ENCODE measurements at regions of chr1 and their contacts with region 1.

Region 1: DNA sequence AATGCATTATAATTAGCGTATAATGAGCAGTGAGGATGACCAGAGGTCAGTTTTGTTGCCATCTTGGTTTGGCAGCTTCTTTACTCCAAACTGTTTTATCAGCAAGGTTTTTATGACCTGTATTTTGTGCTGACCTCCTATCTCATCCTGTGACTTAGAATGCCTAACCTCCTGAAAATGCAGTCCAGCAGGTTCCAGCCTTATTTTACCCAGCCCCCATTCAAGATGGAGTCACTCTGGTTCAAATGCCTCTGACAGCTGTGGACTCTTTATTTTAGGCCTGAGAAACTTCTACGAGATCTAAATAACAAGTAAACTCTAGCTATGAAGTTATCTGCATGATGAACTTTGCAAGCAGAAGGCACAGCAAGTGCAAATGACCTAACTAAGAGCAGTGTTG is 607.6 kb downstream of the LRRIQ3 start:
- DNase-seq: no peak
- ATAC-seq: no peak
- H3K4me3 ChIP-seq: no peak overlapping the region
- H3K27ac ChIP-seq: no peak overlapping the region
- H3K4me1 ChIP-seq: no peaks in the 10 kb centered on the region
- H3K27me3 ChIP-seq: no peaks in the 10 kb centered on the region
- CTCF ChIP-seq: no peak
- POLR2A ChIP-seq: no peak

Region 2: DNA sequence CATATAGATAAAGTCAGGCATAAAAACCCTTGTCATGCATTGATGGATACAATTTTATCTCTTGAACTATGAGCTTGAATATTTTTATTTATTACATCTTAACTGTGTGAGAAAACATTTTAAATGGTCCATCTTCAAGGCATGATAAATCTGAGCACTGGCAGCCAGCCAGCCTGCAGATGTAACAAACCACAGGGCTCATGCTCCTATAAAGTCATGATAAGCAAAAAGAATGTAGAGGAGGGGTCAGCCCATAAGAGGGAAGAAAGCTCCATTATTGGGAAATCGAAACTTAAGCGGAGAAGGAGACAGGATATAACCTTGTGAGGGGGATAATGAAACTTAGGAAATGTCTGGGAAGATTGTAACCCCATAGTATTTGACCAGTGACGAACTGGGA is 231.3 kb before region 1 on chr1:
- intact Hi-C with region 1: no loop called
- DNase-seq: no peak
- ATAC-seq: no peak
- H3K4me3 ChIP-seq: no peak overlapping the region
- H3K27ac ChIP-seq: no peak overlapping the region
- H3K4me1 ChIP-seq: no peaks in the 10 kb centered on the region
- H3K27me3 ChIP-seq: no peaks in the 10 kb centered on the region
- CTCF ChIP-seq: no peak
- POLR2A ChIP-seq: no peak

Region 3: GRCh38 chr1:73556274-73556673 is 34.1 kb before region 1 on chr1:
- intact Hi-C with region 1: loop called in 1 of 10 experiments (anchors 2 kb)
- DNase-seq: no peak
- ATAC-seq: no peak
- H3K4me3 ChIP-seq: no peak overlapping the region
- H3K27ac ChIP-seq: no peak overlapping the region
- H3K4me1 ChIP-seq: no peaks in the 10 kb centered on the region
- H3K27me3 ChIP-seq: no peaks in the 10 kb centered on the region
- CTCF ChIP-seq: no peak
- POLR2A ChIP-seq: no peak

Measured in heart left ventricle (tissue), 16 donors.